Activated CD4-positive, alpha-beta T cell treated with anti-CD3 and anti-CD28 coated beads for 36 hours (primary cell): ENCODE measurements at regions of chr14 and their contacts with region 1.

Region 1: DNA sequence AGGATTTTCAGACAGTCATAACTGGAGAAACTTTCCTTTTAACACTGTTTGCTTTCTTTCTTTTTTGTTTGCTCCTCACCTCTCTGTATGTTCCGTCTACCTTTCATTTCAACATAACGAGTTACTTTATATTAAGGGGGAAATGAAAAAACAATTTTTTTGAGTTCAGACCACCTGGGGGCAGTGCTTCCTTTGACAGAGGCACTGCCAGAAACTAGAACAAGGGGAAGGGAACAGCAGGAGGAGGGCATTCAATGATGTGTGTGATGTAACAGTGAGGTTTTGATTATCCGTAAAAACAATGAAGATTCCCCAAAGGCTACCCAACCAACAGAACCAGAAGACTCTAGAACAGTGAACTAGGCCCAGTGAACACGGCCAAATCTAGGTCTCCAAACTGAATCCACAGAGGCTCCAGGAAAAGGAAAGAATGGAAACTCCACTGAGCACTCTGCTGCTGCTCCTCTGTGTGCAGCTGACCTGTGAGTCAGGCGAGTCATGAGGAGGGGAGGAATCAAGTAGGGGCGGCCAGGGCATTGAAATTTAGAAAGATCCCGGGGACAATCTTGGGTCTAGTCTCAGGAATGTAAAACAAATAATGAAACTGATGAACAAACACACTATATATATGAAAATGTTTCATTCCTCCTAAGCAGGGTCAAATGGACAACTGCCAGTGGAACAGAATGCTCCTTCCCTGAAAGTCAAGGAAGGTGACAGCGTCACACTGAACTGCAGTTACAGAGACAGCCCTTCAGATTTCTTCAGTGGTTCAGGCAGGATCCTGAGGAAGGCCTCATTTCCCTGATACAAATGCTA is 323.5 kb downstream of the DAD1 start:
- DNase-seq: no peak
- ATAC-seq: no peak
- H3K4me3 Mint-ChIP-seq: peak overlapping the region; percentile 21
- H3K27ac Mint-ChIP-seq: no peak overlapping the region
- H3K4me1 Mint-ChIP-seq: peaks cover 7% of the 10 kb centered on the region
- H3K27me3 Mint-ChIP-seq: no peaks in the 10 kb centered on the region

Region 2: DNA sequence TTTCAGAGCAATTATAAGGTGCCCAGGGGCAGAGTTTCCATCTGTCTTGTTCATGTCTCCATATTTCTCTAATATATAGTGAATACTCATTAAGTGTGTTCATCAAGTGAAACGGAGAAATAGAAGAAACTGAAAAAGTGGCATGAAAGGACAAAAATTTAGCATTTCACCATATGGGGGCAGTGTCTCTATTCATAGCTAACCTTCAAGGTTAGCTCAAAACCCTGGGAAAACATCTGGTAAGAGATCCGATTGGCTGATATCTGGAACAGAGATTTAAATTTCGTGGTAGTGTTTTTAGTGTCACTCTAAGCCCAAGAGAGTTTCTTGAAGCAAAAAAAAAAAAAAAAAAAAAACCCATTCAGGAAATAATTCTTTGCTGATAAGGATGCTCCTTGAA is 44.0 kb before region 1 on chr14:
- CTCF ChIA-PET with region 1: interaction called, 3 read pairs
- POLR2A ChIA-PET with region 1: no interaction called
- intact Hi-C with region 1: loop called in 1 of 2 experiments (anchors 5 kb)
- DNase-seq: no peak
- ATAC-seq: no peak
- H3K4me3 Mint-ChIP-seq: peak overlapping the region; percentile 58
- H3K27ac Mint-ChIP-seq: peak overlapping the region; percentile 51
- H3K4me1 Mint-ChIP-seq: peaks cover 14% of the 10 kb centered on the region
- H3K27me3 Mint-ChIP-seq: no peaks in the 10 kb centered on the region

Region 3: GRCh38 chr14:22231018-22231417 is 34.5 kb before region 1 on chr14:
- CTCF ChIA-PET with region 1: interaction called, 3 read pairs
- POLR2A ChIA-PET with region 1: no interaction called
- intact Hi-C with region 1: loop called (anchors 5 kb)
- DNase-seq: peak; percentile 14
- ATAC-seq: peak; percentile 42
- H3K4me3 Mint-ChIP-seq: no peak overlapping the region
- H3K27ac Mint-ChIP-seq: peak overlapping the region; percentile 42
- H3K4me1 Mint-ChIP-seq: peaks cover 3% of the 10 kb centered on the region
- H3K27me3 Mint-ChIP-seq: no peaks in the 10 kb centered on the region